HEK293 (cell line): ENCODE measurements at regions of chr6 and their contacts with region 1.

Region 1: GRCh38 chr6:25263657-25264056 is 15.5 kb upstream of the CARMIL1 start:
- H3K4me3 ChIP-seq: no peak overlapping the region
- H3K27ac ChIP-seq: no peak overlapping the region
- H3K4me1 ChIP-seq: no peaks in the 10 kb centered on the region; the same call in 1 of the 2 replicates
- CTCF ChIP-seq: no peak

Region 2: GRCh38 chr6:25181923-25182322 is 81.7 kb before region 1 on chr6:
- CTCF ChIA-PET with region 1: no interaction called
- POLR2A ChIA-PET with region 1: no interaction called
- H3K4me3 ChIP-seq: no peak overlapping the region
- H3K27ac ChIP-seq: no peak overlapping the region
- H3K4me1 ChIP-seq: peaks cover 3% of the 10 kb centered on the region; the same call in 1 of the 2 replicates
- CTCF ChIP-seq: no peak

Region 3: DNA sequence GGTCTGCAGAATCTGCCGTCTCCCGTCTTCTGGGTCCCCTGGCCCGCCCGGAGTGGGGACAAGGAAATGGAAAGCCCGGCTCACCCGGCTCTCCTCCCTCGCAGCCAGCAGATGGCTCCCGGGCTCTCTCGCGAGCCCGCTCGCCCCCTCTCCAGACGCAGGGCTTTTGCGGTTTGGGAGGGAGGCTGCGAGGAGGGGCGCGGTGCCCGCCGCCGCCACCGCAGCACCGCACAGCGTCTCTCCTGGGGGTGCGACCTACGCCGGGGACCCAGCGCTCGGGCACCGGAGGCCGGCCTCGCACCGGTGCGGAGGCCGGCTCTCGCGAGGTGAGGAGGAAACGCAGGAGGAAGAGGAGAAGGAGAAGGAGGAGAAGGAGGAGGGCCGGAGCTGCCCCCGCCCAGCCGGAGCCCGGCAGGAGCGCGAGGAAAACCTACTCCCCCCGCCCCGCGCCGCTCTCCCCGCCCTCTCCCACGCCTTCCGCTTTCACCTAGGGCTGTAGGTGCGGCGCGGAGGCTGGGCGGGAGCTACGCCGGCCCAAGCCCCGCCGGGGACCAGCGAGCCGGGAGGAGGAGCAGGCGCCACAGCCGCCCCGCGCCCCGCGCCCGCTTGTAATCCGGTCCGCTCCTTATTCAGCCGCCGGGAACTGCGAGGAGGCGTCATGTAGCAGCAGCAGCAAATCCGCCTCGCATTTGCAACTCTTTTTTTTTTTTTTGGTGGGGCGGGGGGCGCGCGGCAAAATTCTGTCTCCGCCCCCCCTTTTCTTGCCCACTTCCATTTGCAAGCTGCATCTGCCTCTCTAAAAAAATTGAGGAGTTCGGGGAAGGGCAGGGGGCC is 15.5 kb after region 1 on chr6 and contains the start of gene CARMIL1:
- CTCF ChIA-PET with region 1: interaction called, 28 read pairs
- POLR2A ChIA-PET with region 1: interaction called, 13 read pairs
- H3K4me3 ChIP-seq: peak within 1 kb of the TSS; percentile 83
- H3K27ac ChIP-seq: peak within 1 kb of the TSS; percentile 89
- H3K4me1 ChIP-seq: peaks cover 15% of the 10 kb centered on the region
- CTCF ChIP-seq: peak; percentile 86

Region 4: DNA sequence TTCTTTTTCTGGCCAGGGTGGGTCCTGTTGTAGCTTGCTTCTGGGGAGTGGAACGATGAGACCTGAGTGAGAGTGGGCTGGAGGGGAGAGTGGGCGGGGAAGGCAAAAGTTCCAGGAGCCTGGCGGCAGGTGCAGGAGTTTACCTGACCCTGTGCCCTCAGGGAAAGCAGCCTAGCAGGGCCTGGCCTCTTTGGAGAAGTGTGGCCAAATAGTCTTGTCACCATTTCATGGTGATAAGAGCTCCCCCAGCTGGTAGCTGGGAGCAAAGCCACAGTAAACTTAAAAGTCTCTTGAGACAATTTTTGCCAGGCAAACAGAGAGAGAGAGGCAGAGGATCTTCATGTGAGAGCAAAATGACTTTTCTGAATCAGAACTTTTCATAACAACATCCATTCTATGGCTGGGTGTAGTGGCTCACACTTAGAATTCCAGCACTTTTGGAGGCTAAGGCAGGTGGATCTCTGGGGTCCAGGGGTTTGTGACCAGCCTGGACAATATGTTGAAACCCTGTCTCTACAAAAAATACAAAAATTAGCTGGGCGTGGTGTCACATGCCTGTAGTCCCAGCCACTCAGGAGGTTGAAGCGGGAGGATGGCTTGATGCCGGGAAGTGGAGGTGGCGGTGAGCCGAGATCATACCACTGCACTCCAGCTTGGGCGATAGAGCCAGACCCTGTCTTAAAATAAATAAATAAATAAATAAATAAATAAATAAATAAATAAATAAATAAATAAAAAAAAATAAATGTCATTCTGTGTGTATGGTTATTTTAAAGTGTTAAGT is 226.6 kb after region 1 on chr6:
- CTCF ChIA-PET with region 1: interaction called, 124 read pairs
- POLR2A ChIA-PET with region 1: interaction called, 6 read pairs
- H3K4me3 ChIP-seq: no peak overlapping the region
- H3K27ac ChIP-seq: no peak overlapping the region
- H3K4me1 ChIP-seq: peaks cover 19% of the 10 kb centered on the region
- CTCF ChIP-seq: peak; percentile 58

Region 5: DNA sequence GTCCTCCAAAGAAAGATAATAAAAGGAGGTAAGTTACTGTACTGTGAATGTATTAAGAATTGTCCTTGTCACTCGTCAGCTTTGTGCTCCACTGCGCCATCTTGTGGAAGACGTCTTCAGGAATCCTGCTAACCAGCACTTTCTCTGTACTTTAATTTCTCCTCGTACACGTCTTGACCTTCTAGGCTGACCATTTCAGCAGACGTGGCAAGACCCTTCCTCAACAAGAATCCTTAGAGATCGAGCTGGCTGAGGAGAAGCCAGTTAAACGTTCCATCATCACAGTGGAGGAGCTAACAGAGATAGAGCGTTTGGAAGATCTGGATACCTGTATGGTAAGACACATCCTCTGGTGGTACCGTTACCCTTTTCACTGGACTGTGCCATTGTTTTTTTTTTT is 292.9 kb after region 1 on chr6:
- CTCF ChIA-PET with region 1: interaction called, 42 read pairs
- POLR2A ChIA-PET with region 1: no interaction called
- H3K4me3 ChIP-seq: no peak overlapping the region
- H3K27ac ChIP-seq: no peak overlapping the region
- H3K4me1 ChIP-seq: no peaks in the 10 kb centered on the region
- CTCF ChIP-seq: peak; percentile 50; the same call in 1 of the 2 replicates